ENCODE measurements at regions of chr3 and their contacts with region 1.

Region 1: GRCh38 chr3:39809181-39809994 is at the start of gene MYRIP:
- DNase-seq: peak; percentile 92
- H3K4me3 Mint-ChIP-seq: peak within 1 kb of the TSS; percentile 94
- H3K27ac Mint-ChIP-seq: peak within 1 kb of the TSS; percentile 70
- H3K4me1 Mint-ChIP-seq: peaks cover 21% of the 10 kb centered on the region
- H3K27me3 Mint-ChIP-seq: peaks cover 55% of the 10 kb centered on the region
- CTCF ChIP-seq: no peak
- total RNA-seq, gene MYRIP: 5.2 and 5.6 TPM in 2 replicates

Region 2: GRCh38 chr3:39724233-39724846 is 85.0 kb before region 1 on chr3:
- CTCF ChIA-PET with region 1: no interaction called
- intact Hi-C with region 1: loop called (anchors 1 kb)
- DNase-seq: peak; percentile 29
- H3K4me3 Mint-ChIP-seq: no peak overlapping the region
- H3K27ac Mint-ChIP-seq: no peak overlapping the region
- H3K4me1 Mint-ChIP-seq: no peaks in the 10 kb centered on the region
- H3K27me3 Mint-ChIP-seq: no peaks in the 10 kb centered on the region
- CTCF ChIP-seq: no peak

Region 3: DNA sequence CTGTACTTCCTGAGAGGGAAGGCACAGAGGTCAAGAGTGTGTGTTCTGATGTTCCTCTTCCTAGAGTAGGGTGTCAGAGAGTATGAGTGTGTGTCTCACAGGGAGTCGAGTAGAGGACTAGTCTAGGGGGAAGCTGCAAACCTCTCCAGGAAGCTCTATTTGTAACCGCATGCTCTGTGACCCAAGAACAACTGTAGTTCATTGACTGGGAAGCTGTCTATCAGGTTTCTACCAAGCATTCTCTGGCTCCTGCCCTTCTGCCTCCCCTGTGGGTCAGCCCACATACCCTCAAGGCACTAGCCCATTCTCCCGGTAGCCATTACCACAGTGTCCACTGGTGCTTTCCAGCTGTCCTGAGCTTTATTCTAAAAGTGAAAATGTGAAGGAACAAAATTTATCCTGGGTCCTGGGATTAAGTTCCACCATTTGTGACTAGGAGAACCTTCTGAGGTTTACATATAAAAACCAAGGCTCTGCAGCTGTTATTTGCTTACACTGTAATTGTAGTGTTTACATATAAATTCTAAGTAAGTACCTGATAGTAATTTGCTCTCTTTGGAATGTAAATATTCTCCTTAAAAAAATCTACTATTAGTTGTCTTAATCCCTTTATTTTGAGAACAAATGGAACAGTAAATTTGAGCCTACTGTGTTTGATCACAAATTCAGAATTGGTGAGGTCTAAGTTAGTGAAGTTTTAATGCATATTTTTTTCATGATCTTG is 40.8 kb after region 1 on chr3:
- CTCF ChIA-PET with region 1: no interaction called
- intact Hi-C with region 1: no loop called
- DNase-seq: peak; percentile 20
- H3K4me3 Mint-ChIP-seq: no peak overlapping the region
- H3K27ac Mint-ChIP-seq: no peak overlapping the region
- H3K4me1 Mint-ChIP-seq: peaks cover 17% of the 10 kb centered on the region
- H3K27me3 Mint-ChIP-seq: no peaks in the 10 kb centered on the region
- CTCF ChIP-seq: no peak

Region 4: GRCh38 chr3:39911465-39912309 is 102.3 kb after region 1 on chr3:
- CTCF ChIA-PET with region 1: no interaction called
- intact Hi-C with region 1: loop called (anchors 5 kb)
- DNase-seq: peak; percentile 54
- H3K4me3 Mint-ChIP-seq: peak overlapping the region; percentile 16
- H3K27ac Mint-ChIP-seq: peak overlapping the region; percentile 71
- H3K4me1 Mint-ChIP-seq: peaks cover 48% of the 10 kb centered on the region
- H3K27me3 Mint-ChIP-seq: no peaks in the 10 kb centered on the region
- CTCF ChIP-seq: no peak

Region 5: GRCh38 chr3:40116478-40117162 is 307.2 kb after region 1 on chr3:
- CTCF ChIA-PET with region 1: interaction called, 5 read pairs
- intact Hi-C with region 1: loop called (anchors 5 kb)
- DNase-seq: peak; percentile 74
- H3K4me3 Mint-ChIP-seq: peak overlapping the region; percentile 28
- H3K27ac Mint-ChIP-seq: peak overlapping the region; percentile 86
- H3K4me1 Mint-ChIP-seq: peaks cover 64% of the 10 kb centered on the region
- H3K27me3 Mint-ChIP-seq: no peaks in the 10 kb centered on the region
- CTCF ChIP-seq: no peak

Measured in Calu3 (cell line).